Left cardiac atrium (tissue), 4 donors: ENCODE measurements at regions of chr2 and their contacts with region 1.

Region 1: GRCh38 chr2:187574969-187575750 is 20.9 kb upstream of the TFPI start:
- DNase-seq: no peak
- ATAC-seq: no peak

Region 2: GRCh38 chr2:187509667-187510417 is 65.3 kb before region 1 on chr2:
- intact Hi-C with region 1: loop called in 1 of 2 experiments (anchors 10 kb)
- DNase-seq: no peak
- ATAC-seq: no peak